Esophagus squamous epithelium (tissue), 5 donors: ENCODE measurements at regions of chr11 and their contacts with region 1.

Region 1: GRCh38 chr11:47938791-47939560 is 41.4 kb upstream of the PTPRJ start:
- DNase-seq: no peak
- H3K4me3 ChIP-seq: no peak overlapping the region
- H3K27ac ChIP-seq: no peak overlapping the region
- H3K4me1 ChIP-seq: peaks cover 0 to 10% (median 4%) of the 10 kb centered on the region in 3 donors
- H3K27me3 ChIP-seq: no peaks in the 10 kb centered on the region
- CTCF ChIP-seq: no peak
- POLR2A ChIP-seq: no peak

Region 2: GRCh38 chr11:46987183-46987582 is 951.8 kb before region 1 on chr11:
- intact Hi-C with region 1: no loop called
- DNase-seq: no peak
- H3K4me3 ChIP-seq: no peak overlapping the region
- H3K27ac ChIP-seq: no peak overlapping the region
- H3K4me1 ChIP-seq: peaks cover 0 to 9% (median 0%) of the 10 kb centered on the region in 3 donors
- H3K27me3 ChIP-seq: no peaks in the 10 kb centered on the region
- CTCF ChIP-seq: peak in 2 of 6 experiments; percentile 15 to 38
- POLR2A ChIP-seq: no peak

Region 3: DNA sequence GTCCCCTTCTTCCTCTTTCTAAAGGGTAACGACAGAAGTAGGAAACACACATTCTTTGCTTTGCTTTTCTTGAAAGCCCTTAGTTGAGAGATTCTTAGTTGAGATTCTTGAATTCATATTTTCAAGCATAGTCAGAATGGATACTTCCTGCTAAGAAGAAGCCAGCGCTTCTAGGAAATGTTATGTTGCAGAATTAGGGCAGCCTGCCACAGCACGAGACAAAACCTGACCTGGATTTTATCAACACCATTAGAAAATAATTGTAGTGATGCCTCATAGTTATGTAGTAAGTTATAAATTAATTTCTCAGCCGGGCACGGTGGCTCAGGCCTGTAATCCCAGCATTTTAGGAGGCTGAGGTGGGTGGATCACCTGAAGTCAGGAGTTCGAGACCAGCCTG is 52.9 kb before region 1 on chr11:
- intact Hi-C with region 1: no loop called
- DNase-seq: no peak
- H3K4me3 ChIP-seq: no peak overlapping the region
- H3K27ac ChIP-seq: peak overlapping the region in 2 of 4 donors; percentile 23 to 43
- H3K4me1 ChIP-seq: peaks cover 0 to 26% (median 0%) of the 10 kb centered on the region in 3 donors
- H3K27me3 ChIP-seq: no peaks in the 10 kb centered on the region
- CTCF ChIP-seq: no peak
- POLR2A ChIP-seq: no peak

Region 4: GRCh38 chr11:48109046-48109666 is 170.2 kb after region 1 on chr11:
- intact Hi-C with region 1: loop called (anchors 5 kb)
- DNase-seq: no peak
- H3K4me3 ChIP-seq: peak overlapping the region in 3 of 4 donors; percentile 25 to 55 (median 26)
- H3K27ac ChIP-seq: peak overlapping the region in 3 of 4 donors; percentile 60 to 66 (median 64)
- H3K4me1 ChIP-seq: peaks cover 10 to 32% (median 11%) of the 10 kb centered on the region in 3 donors
- H3K27me3 ChIP-seq: peaks cover 0 to 4% (median 0%) of the 10 kb centered on the region in 4 donors
- CTCF ChIP-seq: peak in 5 of 6 experiments; percentile 18 to 57 (median 35)
- POLR2A ChIP-seq: no peak